ENCODE measurements at regions of chr3 and their contacts with region 1.

Region 1: DNA sequence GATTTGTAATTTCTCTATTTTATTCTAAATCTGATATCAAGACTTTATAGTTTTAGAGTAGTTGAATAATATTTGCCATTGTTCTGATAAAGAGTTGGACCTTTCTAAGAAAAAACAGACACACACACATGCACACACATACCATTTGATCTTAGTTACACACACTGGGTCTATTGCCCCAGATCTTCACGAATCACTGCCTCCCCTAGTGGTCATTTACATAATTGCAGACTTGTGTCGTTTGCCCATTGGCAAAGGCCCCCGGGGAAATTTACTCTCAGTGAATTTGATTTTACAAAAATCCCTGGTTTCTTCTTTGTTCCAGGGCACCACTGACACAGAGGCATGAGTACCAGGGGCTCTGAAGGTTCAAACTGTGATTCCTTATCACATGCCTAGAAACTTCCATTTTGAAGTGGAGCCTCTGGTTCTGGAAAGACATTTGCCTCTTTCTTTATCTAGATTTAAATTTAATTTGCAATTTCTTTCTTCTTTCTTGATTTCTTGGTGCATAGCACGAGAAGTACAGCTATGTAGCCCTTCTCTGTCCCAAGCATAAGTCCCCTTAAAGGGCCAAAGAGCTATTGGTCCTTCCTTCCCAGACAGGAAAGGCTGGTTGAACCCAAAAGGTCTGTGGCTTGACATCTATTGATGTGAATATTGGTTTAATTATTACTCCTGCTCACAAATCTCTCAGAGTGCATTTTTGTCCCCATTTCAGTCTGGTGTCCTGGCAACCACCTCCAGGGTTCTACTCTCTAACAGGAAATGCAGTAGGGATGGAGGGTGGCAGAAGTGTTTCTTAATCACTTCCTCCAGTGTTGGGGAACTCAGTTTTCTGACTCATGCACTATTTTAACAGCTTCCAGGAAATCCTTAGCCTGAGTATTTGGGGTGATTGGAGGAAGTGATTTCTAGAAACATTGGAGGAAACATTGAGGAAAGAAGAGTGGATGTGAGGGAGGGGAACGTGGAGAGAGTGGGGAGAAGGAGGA is 32.4 kb upstream of the SLC6A11 start:
- DNase-seq: peak; percentile 5 to 66
- H3K4me3 ChIP-seq: no peak overlapping the region
- H3K27ac ChIP-seq: no peak overlapping the region
- H3K4me1 ChIP-seq: no peaks in the 10 kb centered on the region
- H3K27me3 ChIP-seq: no peaks in the 10 kb centered on the region; a peak in 1 of 7 replicates
- CTCF ChIP-seq: peak; percentile 44 to 76 (median 69)
- EP300 ChIP-seq: no peak
- POLR2A ChIP-seq: no peak
- RAD21 ChIP-seq: peak; percentile 56 to 69

Region 2: DNA sequence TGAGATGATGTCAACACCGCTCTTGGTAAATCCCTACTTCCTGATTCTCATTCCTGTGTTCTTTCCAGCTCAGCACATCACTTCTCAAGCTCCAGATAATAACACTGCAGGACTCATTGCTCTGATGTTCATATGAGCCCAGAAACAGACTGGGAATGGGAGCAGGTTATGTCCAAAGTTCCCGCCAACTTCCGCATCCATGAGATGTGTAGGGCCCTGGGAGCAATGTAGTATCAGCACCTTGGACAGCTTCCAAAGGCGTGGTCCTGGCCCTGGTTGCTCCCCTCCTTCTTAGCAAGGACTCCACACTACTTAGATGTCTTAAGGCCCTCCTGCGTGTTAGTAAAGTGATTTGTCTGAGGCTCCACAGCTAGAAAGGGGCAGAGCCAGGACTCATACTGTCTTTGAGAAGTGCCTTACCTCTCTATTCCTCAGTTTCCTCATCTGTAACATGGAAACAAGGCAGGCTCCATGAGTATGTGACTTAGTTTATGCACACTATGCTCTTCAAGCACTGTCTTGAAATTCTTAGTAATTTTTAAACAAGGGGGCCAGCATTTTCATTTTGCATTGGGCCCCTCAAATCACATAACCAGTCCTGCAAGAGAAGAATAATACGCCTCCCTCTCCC is 181.0 kb after region 1 on chr3:
- CTCF ChIA-PET with region 1: interaction called, 10 read pairs
- POLR2A ChIA-PET with region 1: no interaction called
- DNase-seq: peak in 1 of 2 experiments; percentile 70
- H3K4me3 ChIP-seq: no peak overlapping the region
- H3K27ac ChIP-seq: no peak overlapping the region
- H3K4me1 ChIP-seq: peaks cover 0 to 9% (median 3%) of the 10 kb centered on the region in 4 experiments; a peak in 5 of 7 replicates
- H3K27me3 ChIP-seq: no peaks in the 10 kb centered on the region; a peak in 1 of 7 replicates
- CTCF ChIP-seq: no peak
- EP300 ChIP-seq: no peak
- POLR2A ChIP-seq: no peak
- RAD21 ChIP-seq: no peak

Measured in H1 (cell line).